CD4-positive, alpha-beta memory T cell (primary cell): ENCODE measurements at regions of chr7 and their contacts with region 1.

Region 1: GRCh38 chr7:134954197-134955082 is 31.9 kb upstream of the AGBL3 start:
- DNase-seq: peak in 4 of 5 donors; percentile 24 to 39 (median 30)
- H3K4me3 ChIP-seq: no peak overlapping the region
- H3K4me3 Mint-ChIP-seq: no peak overlapping the region
- H3K27ac ChIP-seq: no peak overlapping the region
- H3K27ac Mint-ChIP-seq: peak overlapping the region in 1 of 7 donors; percentile 40
- H3K4me1 ChIP-seq: no peaks in the 10 kb centered on the region
- H3K4me1 Mint-ChIP-seq: no peaks in the 10 kb centered on the region
- H3K27me3 ChIP-seq: no peaks in the 10 kb centered on the region
- H3K27me3 Mint-ChIP-seq: no peaks in the 10 kb centered on the region

Region 2: GRCh38 chr7:134514663-134515062 is 439.8 kb before region 1 on chr7:
- CTCF ChIA-PET with region 1: no interaction called
- POLR2A ChIA-PET with region 1: no interaction called
- intact Hi-C with region 1: loop called (anchors 1 kb)
- DNase-seq: peak in 4 of 5 donors; percentile 45 to 60 (median 55)
- H3K4me3 ChIP-seq: no peak overlapping the region
- H3K4me3 Mint-ChIP-seq: peak overlapping the region in 1 of 8 donors; percentile 63
- H3K27ac ChIP-seq: no peak overlapping the region
- H3K27ac Mint-ChIP-seq: no peak overlapping the region
- H3K4me1 ChIP-seq: no peaks in the 10 kb centered on the region
- H3K4me1 Mint-ChIP-seq: peaks cover 0 to 5% (median 3%) of the 10 kb centered on the region in 4 donors
- H3K27me3 ChIP-seq: no peaks in the 10 kb centered on the region
- H3K27me3 Mint-ChIP-seq: peaks cover 4 to 21% of the 10 kb centered on the region in 2 donors

Region 3: DNA sequence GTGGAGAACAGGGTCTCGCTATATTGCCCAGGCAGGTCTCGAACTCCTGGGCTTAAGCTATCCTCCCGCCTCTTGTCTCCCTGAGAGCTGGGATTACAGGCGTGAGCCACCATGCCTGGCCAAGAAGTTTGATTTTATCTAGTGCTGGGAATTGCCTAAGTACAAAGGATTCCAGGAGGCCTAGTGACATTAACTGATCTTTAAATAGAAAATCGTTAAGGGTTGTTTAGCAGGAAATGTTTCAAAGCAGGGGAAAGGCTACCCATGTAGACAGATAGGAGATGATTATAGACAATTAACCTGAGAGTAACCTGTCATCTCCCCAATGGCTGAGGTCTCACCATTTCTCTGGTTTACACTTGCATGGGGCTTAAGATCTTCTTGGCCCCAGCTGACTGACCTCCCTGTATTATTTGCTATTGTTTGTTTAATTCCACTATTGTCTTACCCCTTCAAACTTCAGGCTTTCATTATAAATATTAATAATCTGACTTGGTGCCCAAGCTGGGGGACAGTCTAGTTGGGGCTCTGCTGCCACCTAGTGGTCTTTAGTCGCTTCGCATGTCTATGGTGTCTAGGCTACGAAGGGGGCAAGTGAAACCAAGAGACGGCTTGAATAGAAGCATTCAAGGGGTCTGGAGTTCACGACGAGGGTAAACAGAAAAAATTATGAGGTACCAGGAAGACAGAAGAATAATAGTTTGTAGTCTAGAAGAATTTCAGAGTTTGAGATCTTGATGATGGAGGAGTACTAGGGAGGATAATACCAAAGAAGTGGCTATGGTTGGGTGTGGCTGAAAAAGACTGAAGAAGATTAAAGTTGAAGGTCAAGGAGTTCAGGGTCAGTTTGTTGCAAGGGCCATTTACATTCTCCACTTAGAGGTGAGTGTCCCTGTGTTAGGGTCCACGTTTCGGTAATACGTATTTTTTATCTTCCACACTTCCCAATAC is 348.2 kb before region 1 on chr7:
- CTCF ChIA-PET with region 1: interaction called, 12 read pairs
- POLR2A ChIA-PET with region 1: no interaction called
- intact Hi-C with region 1: loop called (anchors 1 kb)
- DNase-seq: peak; percentile 45 to 65 (median 48)
- H3K4me3 ChIP-seq: no peak overlapping the region
- H3K4me3 Mint-ChIP-seq: peak overlapping the region; percentile 26 to 80 (median 63)
- H3K27ac ChIP-seq: no peak overlapping the region
- H3K27ac Mint-ChIP-seq: peak overlapping the region in 1 of 7 donors; percentile 15
- H3K4me1 ChIP-seq: no peaks in the 10 kb centered on the region
- H3K4me1 Mint-ChIP-seq: peaks cover 0 to 4% (median 3%) of the 10 kb centered on the region in 4 donors
- H3K27me3 ChIP-seq: no peaks in the 10 kb centered on the region
- H3K27me3 Mint-ChIP-seq: peaks cover 18 to 30% of the 10 kb centered on the region in 2 donors

Region 4: DNA sequence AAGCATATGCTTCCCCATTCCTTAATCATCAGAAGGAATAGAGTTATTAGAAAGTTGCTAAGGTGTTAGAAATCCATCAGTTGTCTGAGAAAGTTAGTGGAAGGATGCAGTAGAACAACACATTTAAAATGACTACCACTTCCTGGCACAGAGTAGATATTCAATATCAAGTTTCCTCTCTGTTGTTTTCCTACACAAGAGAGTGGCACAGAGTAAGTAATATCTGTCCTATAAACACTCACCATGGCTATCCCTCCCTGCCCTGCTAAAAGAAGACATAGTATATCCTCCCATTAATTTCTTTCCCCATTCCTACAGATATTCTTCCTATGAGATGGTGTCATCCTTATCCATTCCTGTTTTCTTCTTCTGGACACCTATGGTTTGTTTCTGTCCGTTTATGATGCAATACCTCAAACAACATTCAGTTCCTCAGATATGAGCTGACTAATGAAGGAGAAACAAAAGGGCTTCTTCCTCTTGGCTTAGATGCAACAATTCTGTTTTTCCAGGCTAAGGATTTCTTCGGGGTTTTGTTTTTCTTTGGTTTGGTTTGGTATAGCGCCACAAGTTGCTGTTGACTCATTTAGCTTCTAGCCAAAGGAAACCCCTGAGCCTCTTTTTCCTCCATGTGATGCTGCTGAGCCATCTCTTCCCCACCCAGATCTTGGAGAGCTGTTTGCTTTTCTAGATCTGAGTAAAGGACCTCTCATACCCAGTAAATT is 340.7 kb before region 1 on chr7:
- CTCF ChIA-PET with region 1: interaction called, 12 read pairs
- POLR2A ChIA-PET with region 1: no interaction called
- intact Hi-C with region 1: loop called (anchors 1 kb)
- DNase-seq: no peak
- H3K4me3 ChIP-seq: no peak overlapping the region
- H3K4me3 Mint-ChIP-seq: no peak overlapping the region
- H3K27ac ChIP-seq: no peak overlapping the region
- H3K27ac Mint-ChIP-seq: no peak overlapping the region
- H3K4me1 ChIP-seq: no peaks in the 10 kb centered on the region
- H3K4me1 Mint-ChIP-seq: peaks cover 0 to 2% (median 0%) of the 10 kb centered on the region in 4 donors
- H3K27me3 ChIP-seq: no peaks in the 10 kb centered on the region
- H3K27me3 Mint-ChIP-seq: peaks cover 20 to 21% of the 10 kb centered on the region in 2 donors

Region 5: GRCh38 chr7:134690016-134690415 is 264.4 kb before region 1 on chr7:
- CTCF ChIA-PET with region 1: no interaction called
- POLR2A ChIA-PET with region 1: no interaction called
- intact Hi-C with region 1: loop called (anchors 5 kb)
- DNase-seq: no peak
- H3K4me3 ChIP-seq: no peak overlapping the region
- H3K4me3 Mint-ChIP-seq: no peak overlapping the region
- H3K27ac ChIP-seq: no peak overlapping the region
- H3K27ac Mint-ChIP-seq: no peak overlapping the region
- H3K4me1 ChIP-seq: no peaks in the 10 kb centered on the region
- H3K4me1 Mint-ChIP-seq: no peaks in the 10 kb centered on the region
- H3K27me3 ChIP-seq: no peaks in the 10 kb centered on the region
- H3K27me3 Mint-ChIP-seq: peaks cover 2 to 3% of the 10 kb centered on the region in 2 donors

Region 6: GRCh38 chr7:134750083-134751062 is 204.1 kb before region 1 on chr7:
- CTCF ChIA-PET with region 1: interaction called, 4 read pairs
- POLR2A ChIA-PET with region 1: no interaction called
- intact Hi-C with region 1: loop called (anchors 2 kb)
- DNase-seq: peak; percentile 40 to 64 (median 52)
- H3K4me3 ChIP-seq: no peak overlapping the region
- H3K4me3 Mint-ChIP-seq: no peak overlapping the region
- H3K27ac ChIP-seq: no peak overlapping the region
- H3K27ac Mint-ChIP-seq: no peak overlapping the region
- H3K4me1 ChIP-seq: no peaks in the 10 kb centered on the region
- H3K4me1 Mint-ChIP-seq: no peaks in the 10 kb centered on the region
- H3K27me3 ChIP-seq: no peaks in the 10 kb centered on the region
- H3K27me3 Mint-ChIP-seq: peaks cover 0 to 2% of the 10 kb centered on the region in 2 donors

Region 7: DNA sequence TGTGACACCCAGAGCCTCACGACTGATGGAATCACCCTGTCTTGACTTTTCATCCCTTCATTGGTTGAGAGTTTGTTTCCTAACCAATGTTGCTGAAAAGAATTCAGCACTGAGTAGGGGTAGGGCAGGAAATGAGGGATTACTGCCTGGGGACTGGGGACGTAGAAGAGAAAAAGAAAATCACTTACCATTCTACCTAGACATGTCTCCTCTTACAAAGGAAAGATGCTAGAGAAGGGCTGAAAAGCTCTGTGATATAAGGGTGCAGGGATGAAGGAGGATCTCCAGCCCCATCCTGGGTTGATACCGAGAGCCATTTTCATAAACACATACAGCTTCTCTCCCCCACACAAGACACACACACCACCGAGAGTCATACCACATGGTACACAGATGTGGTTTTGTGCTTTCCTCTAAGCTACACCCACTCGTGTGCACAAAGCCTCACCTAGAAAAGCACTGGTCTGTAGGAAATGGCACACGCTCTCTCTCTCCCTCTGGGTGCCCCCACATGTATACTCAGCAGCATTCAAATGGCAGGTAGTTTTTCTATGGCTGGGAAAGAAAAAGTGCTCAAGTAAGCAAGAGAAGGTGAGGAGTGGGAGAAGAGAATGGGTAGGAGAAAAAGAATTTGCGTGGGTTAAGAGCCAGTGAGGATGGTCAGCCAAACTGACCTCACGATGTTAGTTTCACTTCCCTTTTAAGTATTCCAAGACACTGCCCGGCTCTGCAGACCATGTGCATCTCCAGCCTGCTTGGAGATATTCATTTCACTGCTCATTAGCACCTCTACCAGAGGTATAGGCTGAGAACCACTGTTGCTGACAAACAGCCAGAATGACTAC is 89.2 kb before region 1 on chr7:
- CTCF ChIA-PET with region 1: no interaction called
- POLR2A ChIA-PET with region 1: no interaction called
- intact Hi-C with region 1: no loop called
- DNase-seq: peak; percentile 39 to 60 (median 48)
- H3K4me3 ChIP-seq: peak overlapping the region in 1 of 2 donors; percentile 32
- H3K4me3 Mint-ChIP-seq: peak overlapping the region; percentile 73 to 88 (median 80)
- H3K27ac ChIP-seq: no peak overlapping the region
- H3K27ac Mint-ChIP-seq: peak overlapping the region; percentile 58 to 91 (median 90)
- H3K4me1 ChIP-seq: peaks cover 12% of the 10 kb centered on the region
- H3K4me1 Mint-ChIP-seq: peaks cover 16 to 30% (median 20%) of the 10 kb centered on the region in 4 donors
- H3K27me3 ChIP-seq: no peaks in the 10 kb centered on the region
- H3K27me3 Mint-ChIP-seq: peaks cover 0 to 4% of the 10 kb centered on the region in 2 donors

Region 8: GRCh38 chr7:134986363-134987251 is 32.2 kb after region 1 on chr7 and contains the start of gene AGBL3:
- CTCF ChIA-PET with region 1: interaction called, 13 read pairs
- POLR2A ChIA-PET with region 1: no interaction called
- intact Hi-C with region 1: no loop called
- DNase-seq: peak; percentile 87 to 91 (median 88)
- H3K4me3 ChIP-seq: peak within 1 kb of the TSS; percentile 60 to 86
- H3K4me3 Mint-ChIP-seq: peak within 1 kb of the TSS; percentile 96 to 99 (median 98)
- H3K27ac ChIP-seq: peak within 1 kb of the TSS; percentile 80
- H3K27ac Mint-ChIP-seq: peak within 1 kb of the TSS; percentile 98 to 100 (median 98)
- H3K4me1 ChIP-seq: peaks cover 20% of the 10 kb centered on the region
- H3K4me1 Mint-ChIP-seq: peaks cover 26 to 41% (median 31%) of the 10 kb centered on the region in 4 donors
- H3K27me3 ChIP-seq: no peaks in the 10 kb centered on the region
- H3K27me3 Mint-ChIP-seq: no peaks in the 10 kb centered on the region
- total RNA-seq, gene AGBL3: 5.5 to 6.2 TPM